PC-3 (cell line): ENCODE measurements at regions of chr7 and their contacts with region 1.

Region 1: GRCh38 chr7:156764016-156764669 is 123.6 kb downstream of the RNF32 start:
- DNase-seq: peak; percentile 70
- ATAC-seq: peak; percentile 100
- H3K4me3 ChIP-seq: no peak overlapping the region
- H3K27ac ChIP-seq: no peak overlapping the region
- H3K4me1 ChIP-seq: peaks cover 3% of the 10 kb centered on the region; the same call in 1 of the 2 replicates
- H3K27me3 ChIP-seq: no peaks in the 10 kb centered on the region
- CTCF ChIP-seq: peak; percentile 82

Region 2: DNA sequence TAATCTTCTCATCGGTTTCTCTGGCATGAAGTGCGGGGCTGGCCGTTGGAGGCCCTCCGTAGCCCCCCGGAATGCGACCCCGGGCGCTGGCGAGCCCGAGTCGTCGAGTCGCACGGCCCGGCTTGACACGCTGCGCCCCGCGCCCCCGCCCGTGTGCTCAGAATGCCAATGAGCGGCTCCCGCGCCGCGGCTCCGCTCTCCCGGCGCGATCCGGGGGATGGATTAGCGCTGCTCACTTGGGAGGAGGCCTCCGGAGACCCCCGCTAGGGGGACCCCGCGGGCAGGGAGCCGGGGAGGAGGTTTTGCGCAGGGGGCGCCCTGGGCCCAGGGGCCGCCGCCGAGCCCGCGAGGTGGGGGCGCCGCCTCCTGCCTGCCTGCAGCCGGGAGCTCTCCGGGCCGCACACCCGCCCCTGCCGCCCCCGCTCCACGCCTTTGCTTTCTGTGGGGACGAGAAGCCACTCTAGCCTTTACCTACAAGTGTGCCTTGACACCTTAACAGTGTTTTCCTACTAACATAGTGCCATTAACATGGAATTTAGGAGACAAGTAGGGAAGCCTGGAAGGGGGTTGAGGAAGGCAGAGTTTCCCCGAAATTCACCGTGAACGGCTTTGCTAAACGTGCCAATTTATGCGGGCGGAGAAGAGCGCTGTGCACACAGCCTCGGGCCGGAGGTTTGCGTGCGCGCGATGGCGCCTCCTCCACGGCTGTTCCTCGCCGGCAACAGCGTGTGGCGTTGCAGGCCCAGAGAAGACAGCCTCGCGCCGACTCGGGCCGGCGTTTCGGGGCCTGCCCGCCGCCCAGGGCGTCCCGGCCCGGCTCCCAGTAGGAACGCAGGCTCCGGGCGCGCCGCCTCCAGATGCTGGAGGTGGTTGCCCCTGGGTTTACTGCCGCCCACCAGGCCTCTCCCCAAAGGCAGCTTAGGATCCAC is 959.0 kb before region 1 on chr7:
- CTCF ChIA-PET with region 1: no interaction called
- POLR2A ChIA-PET with region 1: no interaction called
- intact Hi-C with region 1: loop called (anchors 5 kb)
- DNase-seq: peak; percentile 76
- ATAC-seq: peak; percentile 72
- H3K4me3 ChIP-seq: peak overlapping the region; percentile 68
- H3K27ac ChIP-seq: no peak overlapping the region
- H3K4me1 ChIP-seq: peaks cover 13% of the 10 kb centered on the region; the same call in 1 of the 2 replicates
- H3K27me3 ChIP-seq: peaks cover 20% of the 10 kb centered on the region
- CTCF ChIP-seq: peak; percentile 56

Region 3: DNA sequence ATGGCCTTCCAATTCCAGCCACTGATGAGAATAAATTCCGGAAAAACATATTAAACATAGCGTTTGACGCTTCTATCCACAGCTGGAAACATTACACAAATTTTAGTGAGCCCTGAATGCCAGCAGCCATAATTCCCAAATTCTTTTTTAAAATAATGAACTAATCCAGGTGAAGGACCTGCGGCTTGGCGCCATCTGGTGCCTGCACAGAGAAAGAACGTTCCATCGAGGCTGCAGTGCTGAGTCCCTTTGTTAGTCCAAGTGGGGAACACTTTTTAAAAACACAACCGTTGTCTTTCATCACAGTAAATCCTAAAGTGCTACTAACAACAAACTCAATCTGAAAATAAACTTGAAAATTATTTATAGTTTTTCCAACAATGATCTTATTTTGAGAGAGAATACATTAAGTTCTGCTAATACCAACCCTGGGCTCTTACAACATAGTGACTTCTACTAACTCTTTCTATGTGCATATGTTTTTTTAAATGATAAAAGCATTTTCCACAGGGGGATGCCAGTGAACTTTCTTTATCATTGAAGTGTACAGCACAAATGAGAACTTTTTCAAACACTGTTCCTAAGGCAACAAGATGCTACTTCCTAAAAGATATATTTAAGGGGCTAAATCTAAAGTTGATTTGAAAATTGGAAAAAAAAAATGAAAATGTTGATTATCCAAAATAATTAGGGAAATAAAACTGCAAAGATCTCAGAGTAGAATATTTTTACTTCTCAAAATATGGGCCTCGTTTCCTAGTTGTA is 290.5 kb before region 1 on chr7:
- CTCF ChIA-PET with region 1: no interaction called
- POLR2A ChIA-PET with region 1: no interaction called
- intact Hi-C with region 1: loop called (anchors 2 kb)
- DNase-seq: peak; percentile 52
- ATAC-seq: peak; percentile 65
- H3K4me3 ChIP-seq: no peak overlapping the region
- H3K27ac ChIP-seq: no peak overlapping the region
- H3K4me1 ChIP-seq: peaks cover 12% of the 10 kb centered on the region
- H3K27me3 ChIP-seq: no peaks in the 10 kb centered on the region
- CTCF ChIP-seq: peak; percentile 88

Region 4: DNA sequence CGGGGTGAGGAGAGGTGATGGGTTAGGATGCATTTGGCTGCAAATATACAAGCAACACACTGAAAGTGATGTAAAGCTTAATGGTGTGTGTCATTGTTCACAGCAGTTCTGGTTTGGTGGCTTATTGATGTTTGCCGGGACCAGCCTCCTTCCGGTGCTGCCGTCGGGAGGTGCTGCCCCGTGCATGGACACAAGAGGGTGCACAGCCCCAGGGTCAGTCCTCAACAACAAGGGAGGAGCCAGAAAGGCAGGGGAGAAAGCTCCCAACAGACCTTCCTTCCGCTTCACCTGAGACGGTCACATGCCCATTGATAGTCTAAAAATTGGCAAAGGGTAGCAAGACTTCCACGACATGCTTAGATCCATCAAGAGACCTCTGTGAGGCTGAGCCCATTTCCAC is 114.1 kb before region 1 on chr7:
- CTCF ChIA-PET with region 1: interaction called, 3 read pairs
- POLR2A ChIA-PET with region 1: no interaction called
- intact Hi-C with region 1: loop called (anchors 1 kb)
- DNase-seq: peak; percentile 37
- ATAC-seq: peak; percentile 76
- H3K4me3 ChIP-seq: no peak overlapping the region
- H3K27ac ChIP-seq: no peak overlapping the region
- H3K4me1 ChIP-seq: peaks cover 5% of the 10 kb centered on the region; the same call in 1 of the 2 replicates
- H3K27me3 ChIP-seq: no peaks in the 10 kb centered on the region
- CTCF ChIP-seq: peak; percentile 55

Region 5: DNA sequence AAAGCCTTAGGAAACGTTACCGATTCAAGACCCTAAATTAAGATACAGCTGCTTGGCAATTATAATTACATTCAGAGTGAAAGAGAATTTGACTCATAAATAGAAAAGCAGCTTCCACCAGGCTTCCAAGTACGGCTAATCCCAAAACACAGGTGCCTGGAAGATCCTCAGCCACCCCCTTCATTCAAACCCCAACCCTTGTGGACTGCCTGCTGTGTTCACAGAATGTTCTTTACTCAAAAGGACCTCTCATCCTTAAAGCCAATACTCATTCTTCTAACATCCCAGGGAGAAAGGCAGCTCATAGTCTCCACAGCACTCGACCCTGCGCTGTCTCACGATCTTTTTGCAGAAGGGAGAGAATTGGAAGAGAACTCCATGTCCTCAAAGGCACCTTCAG is 90.7 kb before region 1 on chr7:
- CTCF ChIA-PET with region 1: no interaction called
- POLR2A ChIA-PET with region 1: no interaction called
- intact Hi-C with region 1: loop called (anchors 5 kb)
- DNase-seq: no peak
- ATAC-seq: no peak
- H3K4me3 ChIP-seq: no peak overlapping the region
- H3K27ac ChIP-seq: no peak overlapping the region
- H3K4me1 ChIP-seq: peaks cover 2% of the 10 kb centered on the region
- H3K27me3 ChIP-seq: no peaks in the 10 kb centered on the region
- CTCF ChIP-seq: no peak